Heart left ventricle (tissue), 16 donors: ENCODE measurements at regions of chr9 and their contacts with region 1.

Region 1: GRCh38 chr9:71911253-71912074 is at the start of gene C9orf85:
- DNase-seq: peak; percentile 99 to 100 (median 99)
- ATAC-seq: peak; percentile 99
- H3K4me3 ChIP-seq: peak within 1 kb of the TSS; percentile 66 to 98 (median 94)
- H3K27ac ChIP-seq: peak within 1 kb of the TSS; percentile 70 to 97 (median 94)
- H3K4me1 ChIP-seq: peaks cover 0 to 47% (median 33%) of the 10 kb centered on the region in 12 donors
- H3K27me3 ChIP-seq: no peaks in the 10 kb centered on the region
- CTCF ChIP-seq: no peak
- POLR2A ChIP-seq: no peak
- total RNA-seq, gene C9orf85: 3.6 to 9.7 (median 4.8) TPM

Region 2: GRCh38 chr9:71812385-71812784 is 99.1 kb before region 1 on chr9:
- intact Hi-C with region 1: loop called in 4 of 10 experiments (anchors 5 to 10 kb)
- DNase-seq: peak in 4 of 5 donors; percentile 23 to 67 (median 42)
- ATAC-seq: peak; percentile 65 to 93 (median 82)
- H3K4me3 ChIP-seq: no peak overlapping the region
- H3K27ac ChIP-seq: peak overlapping the region in 4 of 12 donors; percentile 11 to 37 (median 24)
- H3K4me1 ChIP-seq: peaks cover 0 to 14% (median 6%) of the 10 kb centered on the region in 12 donors
- H3K27me3 ChIP-seq: no peaks in the 10 kb centered on the region
- CTCF ChIP-seq: peak in 3 of 12 donors; percentile 23 to 32 (median 24)
- POLR2A ChIP-seq: no peak

Region 3: GRCh38 chr9:71819115-71819739 is 92.2 kb before region 1 on chr9:
- intact Hi-C with region 1: loop called in 4 of 10 experiments (anchors 5 to 10 kb)
- DNase-seq: peak in 2 of 5 donors; percentile 16 to 25
- ATAC-seq: no peak
- H3K4me3 ChIP-seq: no peak overlapping the region
- H3K27ac ChIP-seq: no peak overlapping the region
- H3K4me1 ChIP-seq: peaks cover 0 to 7% (median 0%) of the 10 kb centered on the region in 12 donors
- H3K27me3 ChIP-seq: no peaks in the 10 kb centered on the region
- CTCF ChIP-seq: peak; percentile 62 to 87 (median 78)
- POLR2A ChIP-seq: no peak

Region 4: DNA sequence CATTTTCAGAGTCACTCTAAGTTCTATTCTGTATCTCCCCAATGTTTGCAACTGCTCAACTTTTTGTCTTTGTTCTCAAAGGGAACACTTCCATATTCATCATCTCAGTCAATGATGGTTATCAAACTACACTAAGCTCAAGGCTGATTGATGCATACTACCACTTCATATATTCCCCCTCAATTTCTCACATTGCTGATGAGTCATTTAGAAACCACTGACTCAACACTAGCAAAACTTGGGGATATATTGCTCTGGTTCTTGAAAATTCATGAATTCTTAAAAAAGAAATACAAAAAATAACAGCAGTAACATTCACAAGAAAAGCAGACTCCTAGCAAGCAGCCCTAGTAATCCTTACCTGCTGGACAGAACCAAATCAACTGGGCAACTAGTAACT is 52.7 kb before region 1 on chr9:
- intact Hi-C with region 1: no loop called
- DNase-seq: no peak
- ATAC-seq: no peak
- H3K4me3 ChIP-seq: no peak overlapping the region
- H3K27ac ChIP-seq: no peak overlapping the region
- H3K4me1 ChIP-seq: peaks cover 0 to 3% (median 0%) of the 10 kb centered on the region in 12 donors
- H3K27me3 ChIP-seq: no peaks in the 10 kb centered on the region
- CTCF ChIP-seq: no peak
- POLR2A ChIP-seq: no peak

Region 5: DNA sequence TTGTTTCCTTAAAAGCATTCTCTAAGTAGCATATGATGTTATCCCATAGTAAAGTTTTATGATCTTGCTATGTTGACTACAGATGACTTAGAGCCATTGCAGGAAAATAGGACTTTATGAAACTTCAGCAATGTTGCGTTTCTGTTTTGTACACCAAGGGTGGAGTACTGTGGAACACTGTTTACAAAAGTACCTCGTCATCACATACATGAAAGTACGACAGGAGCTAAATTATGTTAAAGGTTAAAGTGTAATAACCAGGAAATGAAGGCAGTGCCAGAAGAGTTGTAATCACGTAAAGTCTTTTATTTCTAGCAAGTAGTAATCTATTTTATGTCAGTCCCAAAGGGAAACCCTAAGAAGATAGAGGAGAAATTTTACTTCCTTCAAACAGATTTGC is 50.9 kb after region 1 on chr9:
- intact Hi-C with region 1: loop called in 2 of 10 experiments (anchors 10 kb)
- DNase-seq: no peak
- ATAC-seq: peak in 2 of 4 donors; percentile 18 to 54
- H3K4me3 ChIP-seq: no peak overlapping the region
- H3K27ac ChIP-seq: no peak overlapping the region
- H3K4me1 ChIP-seq: no peaks in the 10 kb centered on the region
- H3K27me3 ChIP-seq: no peaks in the 10 kb centered on the region
- CTCF ChIP-seq: no peak
- POLR2A ChIP-seq: no peak

Region 6: GRCh38 chr9:71975833-71976232 is 64.4 kb after region 1 on chr9:
- intact Hi-C with region 1: loop called in 3 of 10 experiments (anchors 5 to 10 kb)
- DNase-seq: no peak
- ATAC-seq: no peak
- H3K4me3 ChIP-seq: no peak overlapping the region
- H3K27ac ChIP-seq: no peak overlapping the region
- H3K4me1 ChIP-seq: peaks cover 0 to 8% (median 4%) of the 10 kb centered on the region in 12 donors
- H3K27me3 ChIP-seq: no peaks in the 10 kb centered on the region
- CTCF ChIP-seq: peak in 9 of 12 donors; percentile 8 to 46 (median 31)
- POLR2A ChIP-seq: no peak

Region 7: DNA sequence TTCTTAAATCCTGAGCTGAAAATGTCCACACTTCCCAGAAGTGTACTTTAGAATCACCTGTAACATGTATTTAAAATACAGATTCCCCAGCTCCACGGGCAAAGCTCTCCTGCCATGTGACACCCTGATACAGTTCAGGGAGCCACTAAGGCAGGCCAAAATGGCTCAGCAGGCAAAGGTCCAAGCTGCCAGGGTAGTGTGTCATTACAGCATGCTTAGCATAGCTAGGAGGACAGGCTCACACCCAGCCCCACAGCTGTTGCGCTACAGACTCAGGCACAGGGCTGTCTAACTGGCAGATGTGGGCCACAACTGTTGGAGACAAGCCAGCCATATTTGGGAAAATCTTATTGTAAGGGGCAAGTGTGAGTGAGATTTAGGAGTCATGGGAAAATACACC is 72.9 kb after region 1 on chr9:
- intact Hi-C with region 1: loop called in 3 of 10 experiments (anchors 5 to 10 kb)
- DNase-seq: peak; percentile 59 to 86 (median 77)
- ATAC-seq: peak; percentile 89 to 97 (median 95)
- H3K4me3 ChIP-seq: no peak overlapping the region
- H3K27ac ChIP-seq: peak overlapping the region in 1 of 12 donors; percentile 28
- H3K4me1 ChIP-seq: peaks cover 0 to 21% (median 7%) of the 10 kb centered on the region in 12 donors
- H3K27me3 ChIP-seq: no peaks in the 10 kb centered on the region
- CTCF ChIP-seq: no peak
- POLR2A ChIP-seq: no peak

Region 8: DNA sequence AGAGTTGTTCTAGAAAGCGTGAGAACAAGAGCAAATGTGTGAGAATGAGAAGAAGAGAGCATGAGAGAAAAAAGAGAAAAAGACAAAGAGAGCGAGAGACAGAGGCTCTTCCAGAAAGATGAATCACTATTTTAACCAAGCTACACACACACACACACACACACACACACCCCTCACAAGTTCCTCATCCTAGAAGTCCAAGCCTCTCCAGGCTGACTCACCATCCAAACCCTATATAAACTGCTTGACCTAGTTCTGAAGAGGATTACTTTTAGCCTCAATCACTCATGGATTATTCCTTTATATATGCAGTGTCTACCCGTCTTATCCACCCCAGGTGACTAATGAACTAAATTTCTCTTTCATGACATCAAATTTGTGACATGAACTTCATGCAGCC is 111.4 kb after region 1 on chr9:
- intact Hi-C with region 1: loop called in 2 of 10 experiments (anchors 10 kb)
- DNase-seq: no peak
- ATAC-seq: no peak
- H3K4me3 ChIP-seq: no peak overlapping the region
- H3K27ac ChIP-seq: no peak overlapping the region
- H3K4me1 ChIP-seq: peaks cover 0 to 3% (median 0%) of the 10 kb centered on the region in 12 donors
- H3K27me3 ChIP-seq: no peaks in the 10 kb centered on the region
- CTCF ChIP-seq: no peak
- POLR2A ChIP-seq: no peak

Region 9: GRCh38 chr9:72092820-72093219 is 181.4 kb after region 1 on chr9:
- intact Hi-C with region 1: no loop called
- DNase-seq: no peak
- ATAC-seq: no peak
- H3K4me3 ChIP-seq: no peak overlapping the region
- H3K27ac ChIP-seq: no peak overlapping the region
- H3K4me1 ChIP-seq: no peaks in the 10 kb centered on the region
- H3K27me3 ChIP-seq: no peaks in the 10 kb centered on the region
- CTCF ChIP-seq: no peak
- POLR2A ChIP-seq: no peak